T-cell (primary cell): ENCODE measurements at regions of chr15 and their contacts with region 1.

Region 1: GRCh38 chr15:89430530-89431341 is 65.6 kb downstream of the RHCG start:
- DNase-seq: peak; percentile 49 to 91 (median 80)
- ATAC-seq: peak; percentile 91 to 97 (median 93)
- H3K4me3 ChIP-seq: peak overlapping the region; percentile 48 to 74
- H3K4me3 Mint-ChIP-seq: peak overlapping the region; percentile 76 to 84 (median 80)
- H3K27ac ChIP-seq: no peak overlapping the region
- H3K27ac Mint-ChIP-seq: no peak overlapping the region
- H3K4me1 ChIP-seq: peaks cover 0 to 8% of the 10 kb centered on the region in 2 experiments
- H3K4me1 Mint-ChIP-seq: peaks cover 5 to 9% (median 6%) of the 10 kb centered on the region in 3 donors
- H3K27me3 ChIP-seq: peaks cover 5 to 46% of the 10 kb centered on the region in 2 experiments
- H3K27me3 Mint-ChIP-seq: peaks cover 24 to 29% of the 10 kb centered on the region in 2 donors

Region 2: GRCh38 chr15:89358755-89359439 is 71.8 kb before region 1 on chr15:
- CTCF ChIA-PET with region 1: interaction called, 13 to 21 read pairs
- POLR2A ChIA-PET with region 1: no interaction called
- DNase-seq: peak; percentile 49 to 90 (median 73)
- ATAC-seq: peak; percentile 88 to 92 (median 91)
- H3K4me3 ChIP-seq: peak overlapping the region; percentile 39 to 45
- H3K4me3 Mint-ChIP-seq: peak overlapping the region; percentile 74 to 82 (median 74)
- H3K27ac ChIP-seq: no peak overlapping the region
- H3K27ac Mint-ChIP-seq: no peak overlapping the region
- H3K4me1 ChIP-seq: peaks cover 0 to 37% of the 10 kb centered on the region in 2 experiments
- H3K4me1 Mint-ChIP-seq: peaks cover 12 to 18% (median 18%) of the 10 kb centered on the region in 3 donors
- H3K27me3 ChIP-seq: peaks cover 18 to 90% of the 10 kb centered on the region in 2 experiments
- H3K27me3 Mint-ChIP-seq: peaks cover 71 to 80% of the 10 kb centered on the region in 2 donors

Region 3: DNA sequence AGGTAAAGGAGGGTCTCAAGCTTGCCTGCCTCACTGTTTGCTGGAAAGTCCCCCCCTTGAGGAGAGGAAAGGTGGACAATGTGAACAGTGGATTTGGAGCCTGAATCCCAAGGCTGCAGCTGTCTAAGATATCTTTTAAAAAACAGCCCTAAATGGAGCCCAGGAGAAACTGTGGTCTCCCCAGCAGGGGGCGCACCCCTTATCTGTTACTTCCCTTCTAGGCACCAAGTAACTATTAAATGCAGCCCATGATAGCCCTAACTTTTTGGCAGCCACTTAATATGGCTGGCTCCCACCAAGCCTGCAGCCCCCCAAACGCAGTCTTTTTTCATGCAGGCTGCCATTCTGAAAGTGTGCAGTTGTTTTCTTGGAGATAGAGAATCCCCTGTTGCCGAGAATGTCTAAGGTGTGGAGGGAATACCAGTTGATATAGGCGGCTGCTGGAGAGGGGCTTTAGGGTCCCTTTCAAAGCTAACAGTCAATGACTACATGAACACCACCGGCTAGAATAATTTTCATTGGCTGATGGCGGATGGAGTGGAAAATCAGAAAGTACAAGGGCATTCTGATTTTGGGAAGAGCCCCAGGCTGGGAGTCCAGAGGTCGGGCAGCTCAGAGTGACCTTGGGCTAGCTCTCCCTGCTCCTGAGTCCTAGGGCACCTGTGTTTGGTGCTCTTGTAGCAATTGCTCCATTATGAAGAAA is 64.3 kb after region 1 on chr15:
- CTCF ChIA-PET with region 1: no interaction called
- POLR2A ChIA-PET with region 1: no interaction called
- DNase-seq: peak in 2 of 35 experiments; percentile 8 to 18
- ATAC-seq: no peak
- H3K4me3 ChIP-seq: no peak overlapping the region
- H3K4me3 Mint-ChIP-seq: peak overlapping the region in 1 of 3 donors; percentile 58
- H3K27ac ChIP-seq: no peak overlapping the region
- H3K27ac Mint-ChIP-seq: no peak overlapping the region
- H3K4me1 ChIP-seq: peaks cover 0 to 9% of the 10 kb centered on the region in 2 experiments
- H3K4me1 Mint-ChIP-seq: peaks cover 5 to 12% (median 10%) of the 10 kb centered on the region in 3 donors
- H3K27me3 ChIP-seq: peaks cover 14 to 79% of the 10 kb centered on the region in 2 experiments
- H3K27me3 Mint-ChIP-seq: peaks cover 54 to 61% of the 10 kb centered on the region in 2 donors